ENCODE measurements at regions of chr2 and their contacts with region 1.

Region 1: DNA sequence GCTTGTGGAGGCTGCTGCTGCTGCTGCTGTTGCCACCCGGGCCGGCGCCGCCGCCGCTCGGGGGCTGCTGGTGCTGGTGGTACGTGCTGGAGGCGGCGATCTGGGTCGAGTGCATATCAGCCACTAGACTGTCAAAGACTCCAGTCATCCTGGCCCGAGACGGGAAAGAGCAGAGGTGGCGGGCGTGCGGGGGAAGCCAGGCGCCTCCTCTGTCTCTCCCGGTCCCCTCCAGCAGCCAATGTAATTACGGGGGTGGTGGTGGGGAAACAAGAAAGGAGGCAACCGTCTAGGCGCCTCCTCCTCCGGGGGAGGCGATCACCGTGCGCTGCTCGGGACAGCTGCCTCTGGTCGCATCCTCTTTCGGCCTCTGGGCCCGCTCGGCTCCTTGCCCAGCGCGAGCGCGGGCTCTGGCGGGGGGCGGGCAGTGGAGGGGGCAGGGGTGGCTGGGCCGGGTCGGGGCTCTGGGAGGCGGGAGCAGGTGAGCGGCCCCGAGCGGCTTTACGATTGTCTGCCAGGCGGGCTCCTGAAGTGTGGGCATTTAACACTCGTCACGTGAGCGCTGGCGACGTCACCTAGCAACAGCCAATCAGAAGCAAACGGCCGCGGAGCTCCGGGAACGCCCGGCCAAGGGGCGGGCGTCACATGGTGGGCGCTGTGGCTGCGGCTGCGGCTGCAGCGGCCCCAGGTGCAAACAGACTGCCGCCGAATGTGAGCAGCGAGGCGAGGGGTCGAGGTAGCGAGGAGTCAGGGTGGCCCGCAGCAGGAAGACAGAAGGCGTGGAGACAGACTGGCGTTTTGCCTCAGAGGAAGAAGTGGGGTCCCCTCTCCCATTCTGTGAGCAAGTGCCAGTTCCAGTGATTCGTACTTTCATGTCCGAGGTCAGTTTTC is at the start of gene DLX2:
- DNase-seq: peak; percentile 95
- ATAC-seq: peak; percentile 54
- H3K4me3 Mint-ChIP-seq: peak within 1 kb of the TSS; percentile 72
- H3K27ac Mint-ChIP-seq: no peak within 1 kb of the TSS
- H3K4me1 Mint-ChIP-seq: peaks cover 39% of the 10 kb centered on the region
- H3K27me3 Mint-ChIP-seq: peaks cover 99% of the 10 kb centered on the region
- CTCF ChIP-seq: no peak
- total RNA-seq, gene DLX2: 0.28 to 0.64 TPM (median 0.55 TPM) in 3 replicates

Region 2: GRCh38 chr2:171703574-171704347 is 398.9 kb before region 1 on chr2:
- CTCF ChIA-PET with region 1: interaction called, 29 read pairs
- POLR2A ChIA-PET with region 1: no interaction called
- DNase-seq: no peak
- ATAC-seq: peak; percentile 52; the same call in 1 of the 2 replicates
- H3K4me3 Mint-ChIP-seq: no peak overlapping the region
- H3K27ac Mint-ChIP-seq: peak overlapping the region; percentile 67; the same call in 1 of the 2 replicates
- H3K4me1 Mint-ChIP-seq: peaks cover 8% of the 10 kb centered on the region; the same call in 1 of the 2 replicates
- H3K27me3 Mint-ChIP-seq: no peaks in the 10 kb centered on the region
- CTCF ChIP-seq: peak; percentile 28; the same call in 1 of the 2 replicates

Region 3: GRCh38 chr2:171787333-171788072 is 315.1 kb before region 1 on chr2:
- CTCF ChIA-PET with region 1: interaction called, 10 read pairs
- POLR2A ChIA-PET with region 1: no interaction called
- DNase-seq: peak; percentile 29
- ATAC-seq: peak; percentile 22
- H3K4me3 Mint-ChIP-seq: no peak overlapping the region
- H3K27ac Mint-ChIP-seq: no peak overlapping the region
- H3K4me1 Mint-ChIP-seq: peaks cover 39% of the 10 kb centered on the region
- H3K27me3 Mint-ChIP-seq: no peaks in the 10 kb centered on the region
- CTCF ChIP-seq: no peak

Region 4: DNA sequence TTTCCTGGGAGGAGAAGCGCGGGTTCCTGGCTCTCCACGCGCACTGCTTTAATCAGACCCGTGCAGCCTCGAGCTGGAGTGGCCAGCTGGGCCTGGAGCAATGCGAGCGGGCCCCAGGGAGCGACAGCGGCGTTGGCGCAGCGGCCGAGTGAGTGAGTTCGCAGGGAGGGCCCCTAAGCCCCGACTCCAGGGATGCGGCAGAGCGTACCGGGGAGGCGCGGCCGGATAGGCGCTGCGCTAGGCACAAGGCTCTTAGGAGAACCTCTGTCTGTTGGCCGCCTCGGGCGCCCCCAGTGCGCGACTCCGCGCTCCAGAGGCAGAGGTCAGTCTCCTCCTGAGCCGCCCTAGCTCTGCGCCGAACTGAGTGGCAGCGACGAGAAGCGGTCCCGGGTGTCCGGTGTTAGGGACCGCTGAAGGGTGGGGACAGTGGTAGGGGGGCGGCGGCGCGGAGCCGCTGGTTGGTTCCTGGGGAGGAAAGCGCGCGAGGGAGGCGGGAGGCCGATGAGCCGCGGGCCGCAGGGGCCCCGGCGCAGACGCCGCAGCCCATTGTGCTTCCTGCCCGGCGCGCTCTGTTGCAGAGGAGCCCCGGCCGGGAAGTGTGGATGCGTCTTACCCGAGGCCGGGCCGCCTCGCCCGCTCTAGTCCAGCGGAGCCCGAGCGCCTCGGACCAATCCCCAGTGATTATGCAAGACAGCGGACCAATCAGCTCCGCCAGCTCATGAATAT is 17.7 kb before region 1 on chr2:
- CTCF ChIA-PET with region 1: interaction called, 123 read pairs
- POLR2A ChIA-PET with region 1: interaction called, 6 read pairs
- DNase-seq: peak; percentile 92
- ATAC-seq: peak; percentile 77
- H3K4me3 Mint-ChIP-seq: peak overlapping the region; percentile 87
- H3K27ac Mint-ChIP-seq: no peak overlapping the region
- H3K4me1 Mint-ChIP-seq: peaks cover 81% of the 10 kb centered on the region
- H3K27me3 Mint-ChIP-seq: peaks cover 100% of the 10 kb centered on the region
- CTCF ChIP-seq: no peak

Region 5: GRCh38 chr2:172113617-172114016 is 11.0 kb after region 1 on chr2:
- CTCF ChIA-PET with region 1: interaction called, 47 read pairs
- POLR2A ChIA-PET with region 1: no interaction called
- DNase-seq: no peak
- ATAC-seq: peak; percentile 42
- H3K4me3 Mint-ChIP-seq: no peak overlapping the region
- H3K27ac Mint-ChIP-seq: no peak overlapping the region
- H3K4me1 Mint-ChIP-seq: peaks cover 10% of the 10 kb centered on the region
- H3K27me3 Mint-ChIP-seq: peaks cover 36% of the 10 kb centered on the region
- CTCF ChIP-seq: 0 out of 2 replicates have a peak, but pooled peaks have one; percentile 27

Region 6: DNA sequence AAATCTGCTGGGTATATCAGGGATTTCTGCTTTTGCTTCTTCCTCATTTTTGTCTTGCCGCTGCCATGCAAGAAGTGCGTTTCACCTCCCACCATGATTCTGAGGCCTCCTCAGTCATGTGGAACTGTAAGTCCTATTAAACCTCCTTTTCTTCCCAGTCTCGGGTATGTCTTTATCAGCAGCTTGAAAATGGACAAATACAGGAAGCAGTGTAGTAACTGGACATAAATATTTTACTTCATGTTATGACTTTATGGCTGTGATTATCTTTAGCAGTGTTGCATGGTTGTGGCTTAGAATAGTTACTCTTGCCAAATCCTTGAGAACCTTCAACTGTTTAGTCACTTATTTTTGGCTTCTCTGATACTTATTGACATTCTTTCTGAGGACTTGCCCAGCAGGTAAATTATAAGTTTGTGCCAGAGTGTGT is 66.3 kb after region 1 on chr2:
- CTCF ChIA-PET with region 1: no interaction called
- POLR2A ChIA-PET with region 1: no interaction called
- DNase-seq: no peak
- ATAC-seq: no peak
- H3K4me3 Mint-ChIP-seq: no peak overlapping the region
- H3K27ac Mint-ChIP-seq: no peak overlapping the region
- H3K4me1 Mint-ChIP-seq: peaks cover 18% of the 10 kb centered on the region
- H3K27me3 Mint-ChIP-seq: peaks cover 12% of the 10 kb centered on the region
- CTCF ChIP-seq: no peak

Measured in WTC11 (cell line).